ENCODE measurements at regions of chr4 and their contacts with region 1.

Region 1: GRCh38 chr4:87235020-87235671 is 14.7 kb upstream of the KLHL8 start:
- DNase-seq: no peak
- ATAC-seq: peak in 1 of 4 donors; percentile 20
- H3K4me3 ChIP-seq: peak overlapping the region in 2 of 4 donors; percentile 38 to 43
- H3K27ac ChIP-seq: no peak overlapping the region
- H3K4me1 ChIP-seq: no peaks in the 10 kb centered on the region
- H3K27me3 ChIP-seq: no peaks in the 10 kb centered on the region
- CTCF ChIP-seq: no peak

Region 2: DNA sequence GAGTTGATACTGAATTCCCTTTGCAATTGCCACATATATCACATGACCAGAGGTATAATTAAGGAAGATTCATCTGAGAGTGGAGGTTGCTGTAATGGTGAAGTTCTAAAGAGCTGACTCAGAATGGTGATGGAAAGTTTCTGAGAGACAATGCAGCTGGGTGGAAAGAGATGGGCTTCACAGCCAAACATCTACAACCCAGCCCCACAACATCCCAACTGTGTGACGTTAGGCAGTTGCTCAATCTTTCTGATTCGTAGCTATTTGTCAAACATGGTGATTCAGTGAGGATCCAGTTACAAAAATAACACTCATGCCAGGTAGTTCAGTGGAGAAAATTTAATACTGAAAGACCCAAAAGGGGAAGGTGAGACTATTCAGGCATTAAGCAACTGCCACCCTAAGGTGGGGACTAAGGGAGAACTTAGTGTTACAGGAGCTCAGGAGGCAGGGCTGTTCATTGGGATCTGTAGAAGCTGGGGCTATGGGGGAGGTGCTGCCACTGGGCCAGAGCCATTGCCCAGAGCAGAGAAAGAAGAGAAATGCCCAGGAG is 307.2 kb before region 1 on chr4:
- intact Hi-C with region 1: loop called in 1 of 3 experiments (anchors 10 kb)
- DNase-seq: peak in 1 of 6 donors; percentile 37
- ATAC-seq: peak; percentile 72 to 88 (median 86)
- H3K4me3 ChIP-seq: no peak overlapping the region
- H3K27ac ChIP-seq: peak overlapping the region in 1 of 4 donors; percentile 75
- H3K4me1 ChIP-seq: peaks cover 0 to 11% (median 0%) of the 10 kb centered on the region in 3 donors
- H3K27me3 ChIP-seq: no peaks in the 10 kb centered on the region
- CTCF ChIP-seq: no peak

Region 3: DNA sequence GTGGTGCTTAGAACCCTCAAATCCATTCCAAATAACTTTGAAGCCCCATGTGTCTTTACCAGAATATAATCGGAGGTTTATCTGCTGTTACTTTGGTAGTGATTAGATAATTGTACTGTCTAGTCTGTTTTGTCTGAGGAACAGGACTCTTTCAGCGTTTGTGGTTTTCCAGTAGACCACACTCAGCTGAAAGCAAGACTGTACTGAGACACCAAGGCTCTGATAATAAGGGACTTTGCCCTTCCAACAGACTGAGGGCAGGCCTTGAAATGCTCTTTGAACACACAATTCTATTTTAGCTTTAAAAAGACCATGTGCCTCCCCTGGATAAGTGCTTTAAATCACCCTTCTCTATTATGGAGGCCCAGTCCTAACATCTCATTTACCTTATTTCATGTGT is 90.8 kb before region 1 on chr4:
- intact Hi-C with region 1: loop called in 1 of 3 experiments (anchors 10 kb)
- DNase-seq: no peak
- ATAC-seq: no peak
- H3K4me3 ChIP-seq: no peak overlapping the region
- H3K27ac ChIP-seq: no peak overlapping the region
- H3K4me1 ChIP-seq: no peaks in the 10 kb centered on the region
- H3K27me3 ChIP-seq: no peaks in the 10 kb centered on the region
- CTCF ChIP-seq: no peak

Region 4: GRCh38 chr4:87150498-87151261 is 84.5 kb before region 1 on chr4:
- intact Hi-C with region 1: loop called (anchors 5 to 10 kb)
- DNase-seq: peak in 2 of 6 donors; percentile 29 to 53
- ATAC-seq: peak; percentile 70 to 95 (median 88)
- H3K4me3 ChIP-seq: no peak overlapping the region
- H3K27ac ChIP-seq: no peak overlapping the region
- H3K4me1 ChIP-seq: no peaks in the 10 kb centered on the region
- H3K27me3 ChIP-seq: no peaks in the 10 kb centered on the region
- CTCF ChIP-seq: peak; percentile 82 to 90 (median 87)

Region 5: DNA sequence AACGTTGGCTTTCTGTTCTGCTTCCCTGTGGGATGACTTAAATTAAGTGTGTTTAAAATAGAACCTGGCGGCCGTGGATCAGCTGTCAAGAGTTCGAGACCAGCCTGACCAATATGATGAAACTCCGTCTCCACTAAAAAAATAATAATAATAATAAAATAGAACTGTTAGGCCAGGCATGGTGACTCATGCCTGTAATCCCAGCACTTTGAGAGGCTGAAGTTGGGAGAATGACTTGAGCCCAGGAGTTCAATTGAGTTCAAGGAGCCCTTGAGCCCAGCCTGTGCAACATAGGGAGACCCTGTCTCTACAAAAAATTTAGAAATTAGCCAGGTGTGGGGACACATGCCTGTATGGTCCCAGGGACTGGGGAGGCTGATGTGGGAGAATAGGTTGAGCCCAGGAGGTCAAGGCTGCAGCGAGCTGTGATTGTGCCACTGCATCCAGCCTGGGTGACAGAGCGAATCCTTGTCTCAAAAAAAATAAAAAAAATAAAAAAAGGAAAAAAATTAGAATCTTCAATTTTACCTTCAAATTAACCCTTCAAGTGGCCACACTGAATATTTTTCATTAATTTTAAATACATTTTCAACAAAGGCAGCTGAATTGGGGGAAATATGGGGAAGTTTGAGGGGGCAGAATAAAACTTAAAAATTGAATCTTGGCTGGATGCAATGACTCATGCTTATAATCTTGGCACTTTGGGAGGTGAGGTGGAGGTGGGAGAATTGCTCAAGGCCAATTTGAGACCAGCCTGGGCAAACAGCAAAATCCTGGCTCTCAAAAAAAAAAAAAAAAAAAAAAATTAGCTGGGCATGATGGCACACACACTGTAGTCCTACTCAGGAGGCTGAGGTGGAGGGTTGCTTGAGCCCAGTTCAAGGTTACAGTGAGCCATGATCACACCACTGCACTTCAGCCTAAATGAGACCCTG is 119.3 kb after region 1 on chr4:
- intact Hi-C with region 1: no loop called
- DNase-seq: peak in 2 of 6 donors; percentile 26 to 56
- ATAC-seq: peak; percentile 71 to 81 (median 78)
- H3K4me3 ChIP-seq: no peak overlapping the region
- H3K27ac ChIP-seq: peak overlapping the region in 2 of 4 donors; percentile 51 to 70
- H3K4me1 ChIP-seq: peaks cover 11 to 31% (median 25%) of the 10 kb centered on the region in 3 donors
- H3K27me3 ChIP-seq: no peaks in the 10 kb centered on the region
- CTCF ChIP-seq: no peak